ENCODE measurements at regions of chr1 and their contacts with region 1.

Region 1: GRCh38 chr1:214623430-214623829 is 20.4 kb downstream of the CENPF start:
- DNase-seq: no peak
- H3K4me3 Mint-ChIP-seq: no peak overlapping the region
- H3K27ac Mint-ChIP-seq: no peak overlapping the region
- H3K4me1 Mint-ChIP-seq: peaks cover under 1% of the 10 kb centered on the region
- H3K27me3 Mint-ChIP-seq: no peaks in the 10 kb centered on the region

Region 2: GRCh38 chr1:214537219-214537618 is 86.2 kb before region 1 on chr1:
- CTCF ChIA-PET with region 1: no interaction called
- intact Hi-C with region 1: no loop called
- DNase-seq: no peak
- H3K4me3 Mint-ChIP-seq: no peak overlapping the region
- H3K27ac Mint-ChIP-seq: no peak overlapping the region
- H3K4me1 Mint-ChIP-seq: no peaks in the 10 kb centered on the region
- H3K27me3 Mint-ChIP-seq: peaks cover 2% of the 10 kb centered on the region

Region 3: GRCh38 chr1:214833178-214833756 is 209.8 kb after region 1 on chr1:
- CTCF ChIA-PET with region 1: no interaction called
- intact Hi-C with region 1: loop called (anchors 10 kb)
- DNase-seq: no peak
- H3K4me3 Mint-ChIP-seq: no peak overlapping the region
- H3K27ac Mint-ChIP-seq: no peak overlapping the region
- H3K4me1 Mint-ChIP-seq: no peaks in the 10 kb centered on the region
- H3K27me3 Mint-ChIP-seq: peaks cover 4% of the 10 kb centered on the region